ENCODE measurements at regions of chr2 and their contacts with region 1.

Region 1: DNA sequence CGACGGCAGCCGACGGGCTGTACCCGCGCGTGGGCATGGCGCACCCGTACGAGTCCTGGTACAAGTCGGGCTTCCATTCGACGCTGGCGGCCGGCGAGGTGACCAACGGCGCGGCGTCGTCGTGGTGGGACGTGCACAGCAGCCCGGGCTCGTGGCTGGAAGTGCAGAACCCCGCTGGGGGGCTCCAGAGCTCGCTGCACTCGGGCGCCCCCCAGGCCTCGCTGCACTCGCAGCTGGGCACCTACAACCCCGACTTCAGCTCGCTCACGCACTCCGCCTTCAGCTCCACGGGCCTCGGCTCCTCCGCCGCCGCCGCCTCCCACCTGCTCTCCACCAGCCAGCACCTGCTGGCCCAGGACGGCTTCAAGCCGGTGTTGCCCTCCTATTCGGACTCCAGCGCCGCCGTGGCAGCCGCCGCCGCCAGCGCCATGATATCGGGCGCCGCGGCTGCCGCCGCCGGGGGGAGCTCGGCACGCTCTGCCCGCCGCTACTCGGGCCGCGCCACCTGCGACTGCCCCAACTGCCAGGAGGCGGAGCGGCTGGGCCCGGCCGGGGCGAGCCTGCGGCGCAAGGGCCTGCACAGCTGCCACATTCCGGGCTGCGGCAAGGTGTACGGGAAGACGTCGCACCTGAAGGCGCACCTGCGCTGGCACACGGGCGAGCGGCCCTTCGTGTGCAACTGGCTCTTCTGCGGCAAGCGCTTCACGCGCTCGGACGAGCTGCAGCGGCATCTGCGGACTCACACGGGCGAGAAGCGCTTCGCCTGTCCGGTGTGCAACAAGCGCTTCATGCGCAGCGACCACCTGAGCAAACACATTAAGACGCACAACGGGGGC is 2.0 kb downstream of the SP9 start:
- DNase-seq: no peak
- ATAC-seq: no peak

Region 2: DNA sequence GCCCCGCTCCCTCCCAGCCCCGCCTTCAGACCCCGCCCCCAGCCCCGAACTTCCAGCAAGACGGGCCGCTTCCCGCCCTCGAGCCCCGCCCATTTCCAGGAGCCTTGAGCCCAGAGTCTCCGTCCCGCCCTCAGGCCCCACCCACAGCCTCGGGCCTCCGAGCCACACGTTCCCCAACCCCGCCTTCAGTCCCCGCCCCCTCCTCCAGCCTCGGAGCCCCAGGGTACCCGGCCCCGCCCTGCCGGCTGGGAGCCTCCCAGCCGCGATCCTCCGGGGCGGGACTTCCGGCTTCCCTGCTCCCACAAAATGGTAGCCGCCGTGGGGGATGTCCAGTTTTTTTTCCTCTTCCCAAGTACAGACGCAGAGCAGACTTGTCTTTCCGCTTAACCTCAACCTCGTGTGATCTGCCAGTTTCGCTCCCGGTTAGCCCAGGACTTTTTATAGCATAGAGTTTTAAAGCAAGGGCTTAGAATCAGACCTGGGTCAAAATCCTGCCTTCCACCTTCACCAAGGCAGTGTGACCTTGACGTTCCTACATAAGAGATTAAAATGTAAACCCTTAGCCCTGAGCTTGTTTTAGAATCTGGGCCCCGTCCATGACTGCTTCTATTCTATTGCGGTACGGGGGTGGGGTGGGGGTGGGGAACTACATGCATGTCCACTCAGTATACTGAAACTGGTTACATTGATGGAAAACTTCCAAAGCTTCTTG is 150.5 kb after region 1 on chr2:
- intact Hi-C with region 1: no loop called
- DNase-seq: peak; percentile 100
- ATAC-seq: peak; percentile 99

Region 3: GRCh38 chr2:176096986-176097819 is 1760.5 kb after region 1 on chr2:
- intact Hi-C with region 1: loop called (anchors 10 kb)
- DNase-seq: no peak
- ATAC-seq: peak; percentile 75

Measured in sciatic nerve (tissue), 2 donors.